ENCODE measurements at regions of chr22 and their contacts with region 1.

Region 1: GRCh38 chr22:30277547-30278344 is 11.1 kb upstream of the OSM start:
- H3K4me3 ChIP-seq: no peak overlapping the region
- H3K27ac ChIP-seq: no peak overlapping the region
- H3K4me1 ChIP-seq: no peaks in the 10 kb centered on the region
- CTCF ChIP-seq: no peak

Region 2: GRCh38 chr22:30127749-30128166 is 150.0 kb before region 1 on chr22:
- CTCF ChIA-PET with region 1: interaction called, 5 read pairs
- POLR2A ChIA-PET with region 1: interaction called, 10 read pairs
- H3K4me3 ChIP-seq: no peak overlapping the region
- H3K27ac ChIP-seq: no peak overlapping the region
- H3K4me1 ChIP-seq: no peaks in the 10 kb centered on the region
- CTCF ChIP-seq: no peak

Region 3: DNA sequence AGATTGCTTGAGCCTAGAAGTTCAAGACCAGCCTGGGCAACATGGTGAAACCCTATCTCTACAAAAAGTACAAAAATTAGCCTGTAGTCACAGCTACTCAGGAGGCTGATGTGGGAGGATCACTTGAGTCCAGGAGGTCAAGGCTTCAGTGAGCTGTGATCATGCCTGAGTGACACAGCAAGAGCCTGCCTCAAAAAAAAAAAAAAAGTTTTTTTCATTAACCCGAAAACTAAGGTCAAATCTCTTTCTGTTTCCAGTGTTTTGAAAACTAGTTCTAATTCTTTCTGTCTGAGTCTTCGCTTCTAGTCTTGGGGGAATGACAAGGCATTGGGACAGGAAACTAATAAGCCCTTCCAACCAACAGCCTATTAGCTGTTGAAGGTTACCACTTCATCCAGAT is 88.8 kb before region 1 on chr22:
- CTCF ChIA-PET with region 1: no interaction called
- POLR2A ChIA-PET with region 1: no interaction called
- H3K4me3 ChIP-seq: no peak overlapping the region
- H3K27ac ChIP-seq: no peak overlapping the region
- H3K4me1 ChIP-seq: no peaks in the 10 kb centered on the region
- CTCF ChIP-seq: no peak

Region 4: DNA sequence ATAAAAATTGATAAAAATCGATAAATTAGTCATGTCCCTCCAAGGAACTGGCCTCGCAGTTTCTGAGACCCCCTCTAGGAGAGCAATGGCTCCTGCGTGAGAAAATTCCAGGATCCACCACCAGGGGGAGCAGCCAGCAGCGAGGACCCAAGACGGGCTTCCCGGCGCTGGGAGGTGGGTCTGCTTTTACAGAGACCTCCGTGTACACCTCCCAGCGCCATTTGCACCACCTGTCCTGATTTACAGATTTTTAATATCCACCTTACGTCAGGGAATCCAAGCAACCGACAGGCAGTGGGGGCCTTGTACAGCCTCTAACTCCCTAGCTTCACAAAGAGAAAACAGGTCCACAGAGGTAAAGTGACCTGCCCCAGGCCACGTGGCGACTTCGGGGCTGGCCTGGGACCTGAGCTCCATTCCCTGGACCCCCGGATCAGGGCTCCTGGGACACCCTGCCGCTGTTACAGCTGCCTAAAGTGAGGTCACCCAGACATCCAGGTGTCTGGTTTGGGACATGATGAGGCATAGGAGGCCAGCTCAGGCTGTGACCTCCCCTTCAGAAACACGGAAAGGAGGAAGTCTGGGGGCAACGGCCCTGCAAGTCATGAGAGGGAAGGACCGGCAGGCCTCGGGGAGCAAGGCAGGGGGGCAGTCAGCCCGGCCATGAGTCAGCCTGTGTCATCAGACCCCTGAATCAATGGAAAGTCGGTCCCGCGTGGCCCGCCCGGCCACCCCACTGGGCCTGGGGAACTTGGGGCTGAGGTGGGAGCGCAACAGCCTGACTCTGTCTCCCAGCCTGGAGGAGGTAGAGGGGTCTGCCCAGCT is 14.6 kb before region 1 on chr22:
- CTCF ChIA-PET with region 1: interaction called, 11 read pairs
- POLR2A ChIA-PET with region 1: no interaction called
- H3K4me3 ChIP-seq: no peak overlapping the region
- H3K27ac ChIP-seq: no peak overlapping the region
- H3K4me1 ChIP-seq: no peaks in the 10 kb centered on the region
- CTCF ChIP-seq: peak; percentile 67

Region 5: DNA sequence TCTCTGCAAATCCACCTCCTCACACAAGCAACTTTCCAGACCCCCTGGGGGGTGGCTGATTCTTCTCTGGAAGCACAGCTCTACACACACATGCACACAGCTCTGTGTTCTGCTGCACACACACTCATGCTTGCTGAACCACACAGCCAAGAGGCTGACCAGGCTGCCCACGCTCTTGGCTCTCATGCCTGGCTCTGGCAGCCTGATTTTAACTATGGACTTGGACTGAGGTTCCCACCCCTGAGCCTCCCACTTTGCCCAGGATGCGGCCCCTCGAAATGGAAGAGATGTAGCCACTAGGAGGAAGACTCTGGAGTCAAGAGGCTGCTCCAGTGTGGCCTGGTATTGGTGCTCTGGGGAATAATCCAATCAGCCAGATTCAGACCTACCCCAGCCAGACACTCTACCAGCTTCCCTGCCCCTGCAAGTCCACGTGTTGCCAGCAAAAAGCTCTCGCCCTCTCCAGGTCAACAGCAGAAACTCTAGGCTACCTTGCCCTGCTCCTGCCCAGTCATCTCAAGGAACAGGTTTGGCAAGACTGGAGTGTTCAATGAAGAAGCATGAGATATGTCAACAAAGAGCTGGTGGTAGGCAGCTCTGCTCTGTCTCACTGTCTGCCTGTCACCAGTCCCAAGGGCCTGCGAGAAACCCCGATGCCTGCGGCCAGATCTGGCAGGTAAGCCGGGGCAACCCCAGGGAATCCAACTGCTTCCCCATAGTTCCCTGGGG is 20.4 kb after region 1 on chr22:
- CTCF ChIA-PET with region 1: no interaction called
- POLR2A ChIA-PET with region 1: no interaction called
- H3K4me3 ChIP-seq: no peak overlapping the region
- H3K27ac ChIP-seq: no peak overlapping the region
- H3K4me1 ChIP-seq: no peaks in the 10 kb centered on the region
- CTCF ChIP-seq: no peak

Measured in HEK293 (cell line).